PC-9 (cell line): ENCODE measurements at regions of chr1 and their contacts with region 1.

Region 1: GRCh38 chr1:154404984-154405761 is at the start of gene IL6R:
- DNase-seq: peak; percentile 88
- H3K4me3 ChIP-seq: peak within 1 kb of the TSS; percentile 66
- H3K27ac ChIP-seq: no peak within 1 kb of the TSS
- H3K4me1 ChIP-seq: peaks cover 15% of the 10 kb centered on the region
- H3K27me3 ChIP-seq: 0 out of 2 replicates have a peak, but pooled peaks cover 5% of the 10 kb centered on the region
- CTCF ChIP-seq: 0 out of 2 replicates have a peak, but pooled peaks have one; percentile 29
- total RNA-seq, gene IL6R: 1.5 and 3.2 TPM in 2 replicates

Region 2: GRCh38 chr1:154313066-154313356 is 92.2 kb before region 1 on chr1:
- CTCF ChIA-PET with region 1: no interaction called
- POLR2A ChIA-PET with region 1: no interaction called
- intact Hi-C with region 1: no loop called
- DNase-seq: no peak
- H3K4me3 ChIP-seq: no peak overlapping the region
- H3K27ac ChIP-seq: no peak overlapping the region
- H3K4me1 ChIP-seq: no peaks in the 10 kb centered on the region
- H3K27me3 ChIP-seq: peaks cover 66% of the 10 kb centered on the region
- CTCF ChIP-seq: no peak

Region 3: GRCh38 chr1:154324669-154325582 is 80.2 kb before region 1 on chr1 and contains the start of gene ATP8B2:
- CTCF ChIA-PET with region 1: no interaction called
- POLR2A ChIA-PET with region 1: no interaction called
- intact Hi-C with region 1: loop called (anchors 1 kb)
- DNase-seq: peak in 1 of 2 experiments; percentile 60
- H3K4me3 ChIP-seq: no peak within 1 kb of the TSS
- H3K27ac ChIP-seq: no peak within 1 kb of the TSS
- H3K4me1 ChIP-seq: no peaks in the 10 kb centered on the region
- H3K27me3 ChIP-seq: peaks cover 57% of the 10 kb centered on the region
- CTCF ChIP-seq: peak; percentile 80
- total RNA-seq, gene ATP8B2: 0.07 and 1.4 TPM in 2 replicates

Region 4: DNA sequence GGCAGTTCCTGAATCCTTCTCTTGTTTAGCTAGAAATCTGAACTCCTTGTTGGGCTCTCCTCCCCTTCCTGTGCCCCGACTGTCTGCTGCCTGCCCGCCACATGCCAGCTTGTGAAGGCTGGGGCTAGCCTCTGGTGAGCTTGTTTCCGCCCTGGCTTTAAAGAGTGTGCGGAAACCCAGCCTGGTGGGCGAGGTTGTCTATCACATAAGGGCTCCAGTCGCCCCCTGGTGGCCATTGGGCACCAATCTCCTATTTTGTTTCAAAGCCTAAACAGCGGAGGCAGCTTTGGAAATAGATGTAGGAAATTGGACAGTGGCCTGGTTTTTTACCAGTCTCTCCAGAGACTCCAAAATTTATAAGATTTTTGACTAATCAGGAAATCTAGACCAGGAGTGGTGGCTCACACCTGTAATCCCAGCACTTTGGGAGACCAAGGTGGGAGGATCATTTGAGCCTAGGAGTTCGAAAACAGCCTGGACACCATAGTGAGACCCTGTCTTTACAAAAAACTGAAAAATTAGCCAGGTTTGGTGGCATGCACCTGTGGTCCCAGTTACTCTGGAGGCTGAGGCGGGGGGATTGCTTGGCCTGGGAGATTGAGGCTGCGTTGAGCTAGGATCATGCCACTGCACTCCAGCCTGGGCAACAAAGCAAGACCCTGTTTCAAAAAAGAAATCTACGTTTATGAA is 70.0 kb before region 1 on chr1:
- CTCF ChIA-PET with region 1: no interaction called
- POLR2A ChIA-PET with region 1: no interaction called
- intact Hi-C with region 1: loop called (anchors 5 kb)
- DNase-seq: peak in 1 of 2 experiments; percentile 66
- H3K4me3 ChIP-seq: no peak overlapping the region
- H3K27ac ChIP-seq: no peak overlapping the region
- H3K4me1 ChIP-seq: no peaks in the 10 kb centered on the region
- H3K27me3 ChIP-seq: peaks cover 78% of the 10 kb centered on the region
- CTCF ChIP-seq: peak; percentile 90

Region 5: DNA sequence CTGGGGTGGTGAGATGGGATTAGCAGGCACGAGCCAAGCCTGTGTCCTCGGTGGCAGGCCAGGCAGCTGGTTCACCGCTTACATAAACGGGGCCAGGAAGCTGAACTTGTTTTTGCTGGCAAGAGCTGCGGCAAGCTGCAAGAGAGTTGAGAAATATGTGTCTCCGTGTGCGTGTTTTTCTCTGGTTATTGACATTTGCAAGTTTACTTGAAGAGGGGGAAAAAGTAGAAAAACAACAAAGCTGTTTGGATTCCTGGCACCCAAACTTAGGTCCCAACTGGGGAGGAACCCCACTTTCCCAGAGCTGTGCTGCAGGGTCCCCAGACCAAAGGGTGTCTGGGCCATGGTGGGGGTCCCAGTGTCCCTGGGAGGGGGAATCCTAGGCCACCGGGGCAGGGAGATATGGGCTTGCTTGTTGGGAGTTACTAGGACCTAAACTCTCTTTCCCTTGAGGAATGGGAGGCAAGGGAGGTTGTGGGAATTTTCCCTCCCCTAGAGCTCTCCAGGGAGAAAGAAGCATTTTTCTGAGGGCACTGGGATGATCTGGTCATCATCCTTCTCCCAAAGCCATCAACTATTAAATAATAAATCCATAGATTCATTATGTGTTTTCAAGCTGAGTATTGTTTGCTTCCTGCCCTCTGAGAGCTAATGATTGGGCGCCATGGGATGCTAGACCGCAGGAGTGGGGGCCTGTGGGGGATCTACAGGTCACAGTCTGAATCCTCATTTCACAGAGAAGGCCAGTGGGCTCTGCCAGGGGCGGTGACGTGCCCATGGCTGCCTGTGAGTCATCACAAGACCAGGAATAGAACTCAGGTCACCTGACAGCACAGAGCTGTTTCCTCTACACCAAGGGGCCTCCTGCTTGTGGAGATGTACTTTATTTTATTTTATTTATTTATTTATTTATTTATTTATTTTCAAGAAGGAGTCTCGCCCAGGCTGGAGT is 14.7 kb after region 1 on chr1:
- CTCF ChIA-PET with region 1: no interaction called
- POLR2A ChIA-PET with region 1: interaction called, 3 read pairs
- intact Hi-C with region 1: loop called (anchors 1 kb)
- DNase-seq: peak; percentile 63 to 85
- H3K4me3 ChIP-seq: no peak overlapping the region
- H3K27ac ChIP-seq: peak overlapping the region; percentile 66
- H3K4me1 ChIP-seq: peaks cover 52% of the 10 kb centered on the region
- H3K27me3 ChIP-seq: no peaks in the 10 kb centered on the region
- CTCF ChIP-seq: no peak

Region 6: GRCh38 chr1:154431586-154432373 is 26.6 kb after region 1 on chr1:
- CTCF ChIA-PET with region 1: no interaction called
- POLR2A ChIA-PET with region 1: no interaction called
- intact Hi-C with region 1: loop called (anchors 1 kb)
- DNase-seq: peak in 1 of 2 experiments; percentile 78
- H3K4me3 ChIP-seq: no peak overlapping the region
- H3K27ac ChIP-seq: peak overlapping the region; percentile 28; the same call in 1 of the 2 replicates
- H3K4me1 ChIP-seq: peaks cover 39% of the 10 kb centered on the region
- H3K27me3 ChIP-seq: no peaks in the 10 kb centered on the region
- CTCF ChIP-seq: no peak

Region 7: GRCh38 chr1:154546264-154547063 is 141.3 kb after region 1 on chr1:
- CTCF ChIA-PET with region 1: interaction called, 3 read pairs
- POLR2A ChIA-PET with region 1: no interaction called
- intact Hi-C with region 1: loop called (anchors 5 kb)
- DNase-seq: peak; percentile 39 to 66
- H3K4me3 ChIP-seq: no peak overlapping the region
- H3K27ac ChIP-seq: no peak overlapping the region
- H3K4me1 ChIP-seq: no peaks in the 10 kb centered on the region
- H3K27me3 ChIP-seq: peaks cover 33% of the 10 kb centered on the region
- CTCF ChIP-seq: peak; percentile 85